HAP-1 (cell line): ENCODE measurements at regions of chr2 and their contacts with region 1.

Region 1: DNA sequence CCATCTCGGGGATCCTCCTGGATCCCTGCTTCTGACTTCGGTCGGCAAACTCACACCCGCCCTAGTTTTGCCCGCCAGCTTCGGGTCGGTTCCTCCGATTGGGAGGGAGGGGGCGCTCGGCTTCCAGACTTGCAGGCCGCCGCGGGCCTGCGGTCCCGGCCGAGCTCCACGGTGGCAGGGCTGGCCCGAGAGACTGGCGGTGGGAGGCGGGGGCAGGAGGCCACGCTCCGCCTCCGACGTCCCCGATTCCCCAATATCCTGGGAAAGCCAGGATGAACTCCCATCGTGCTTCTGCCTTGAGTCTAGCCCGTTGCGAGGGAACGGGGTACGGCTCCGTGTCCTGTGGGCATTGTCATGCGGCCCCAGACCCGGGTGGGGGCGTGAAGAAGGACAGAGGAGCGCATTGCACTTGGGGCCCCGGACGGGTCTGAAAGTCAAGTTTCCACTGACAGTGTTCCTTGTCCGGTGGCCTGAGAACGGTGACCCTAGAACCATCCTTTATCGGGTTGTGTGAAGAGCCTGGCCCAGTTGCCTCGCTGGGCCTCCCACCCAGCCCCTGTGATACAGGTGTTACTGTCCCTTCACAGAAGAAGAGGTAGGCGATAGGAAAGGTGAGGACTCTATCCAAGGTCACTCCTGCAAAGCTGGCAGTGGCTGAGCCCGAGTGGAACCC is 2.4 kb upstream of the INHBB start:
- DNase-seq: peak; percentile 72 to 90
- H3K4me3 ChIP-seq: no peak overlapping the region
- H3K4me1 ChIP-seq: 0 out of 2 replicates have a peak, but pooled peaks cover 2% of the 10 kb centered on the region
- H3K27me3 ChIP-seq: peaks cover 24% of the 10 kb centered on the region

Region 2: DNA sequence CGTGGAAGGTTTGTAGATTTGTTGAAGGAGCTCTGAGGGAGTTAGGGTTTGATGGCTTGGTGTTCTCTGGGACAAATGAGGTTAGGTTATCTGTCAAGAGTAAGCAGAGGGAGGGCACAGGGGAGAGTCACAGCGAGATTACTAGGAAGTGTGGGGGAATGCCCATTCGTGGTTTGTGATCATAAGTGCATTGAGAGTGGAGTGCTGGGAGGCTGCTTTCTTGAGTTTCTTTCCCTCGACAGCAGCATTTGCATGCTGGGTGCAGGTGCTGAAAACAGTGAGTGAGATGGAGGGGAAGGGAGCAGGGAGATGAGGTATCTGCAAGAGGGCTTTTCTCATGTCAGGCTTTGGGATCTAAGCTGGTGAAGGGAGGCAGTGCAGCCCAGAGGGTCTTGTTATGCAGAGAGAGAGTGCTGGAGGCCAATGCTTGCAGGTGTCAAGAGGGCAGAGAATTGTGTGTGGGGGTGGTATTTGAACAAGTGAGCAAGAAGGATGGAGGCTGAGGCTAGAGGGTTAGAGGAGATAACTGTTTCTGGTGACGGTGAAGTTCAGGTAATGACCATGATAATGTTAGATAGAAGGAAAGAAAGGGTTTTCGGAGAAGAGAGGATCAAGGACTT is 82.1 kb before region 1 on chr2:
- in situ Hi-C with region 1: no loop called
- DNase-seq: no peak
- H3K4me3 ChIP-seq: no peak overlapping the region
- H3K4me1 ChIP-seq: peaks cover 7% of the 10 kb centered on the region
- H3K27me3 ChIP-seq: no peaks in the 10 kb centered on the region

Region 3: GRCh38 chr2:120539937-120540718 is 196.6 kb after region 1 on chr2:
- in situ Hi-C with region 1: loop called (anchors 10 kb)
- DNase-seq: no peak
- H3K4me3 ChIP-seq: no peak overlapping the region
- H3K4me1 ChIP-seq: no peaks in the 10 kb centered on the region
- H3K27me3 ChIP-seq: no peaks in the 10 kb centered on the region; the same call in 1 of the 2 replicates

Region 4: GRCh38 chr2:120675460-120676130 is 332.0 kb after region 1 on chr2:
- in situ Hi-C with region 1: loop called (anchors 5 kb)
- DNase-seq: peak; percentile 45 to 83
- H3K4me3 ChIP-seq: no peak overlapping the region
- H3K4me1 ChIP-seq: no peaks in the 10 kb centered on the region; the same call in 1 of the 2 replicates
- H3K27me3 ChIP-seq: peaks cover 7% of the 10 kb centered on the region